ENCODE measurements at regions of chr5 and their contacts with region 1.

Region 1: GRCh38 chr5:81105261-81105877 is 127.8 kb upstream of the CKMT2 start:
- DNase-seq: no peak
- ATAC-seq: peak; percentile 40
- H3K4me3 Mint-ChIP-seq: no peak overlapping the region
- H3K27ac Mint-ChIP-seq: peak overlapping the region; percentile 20
- H3K4me1 Mint-ChIP-seq: peaks cover 29% of the 10 kb centered on the region
- H3K27me3 Mint-ChIP-seq: no peaks in the 10 kb centered on the region
- CTCF ChIP-seq: no peak

Region 2: GRCh38 chr5:80822640-80823039 is 282.7 kb before region 1 on chr5:
- CTCF ChIA-PET with region 1: no interaction called
- POLR2A ChIA-PET with region 1: no interaction called
- intact Hi-C with region 1: no loop called
- DNase-seq: no peak
- ATAC-seq: no peak
- H3K4me3 Mint-ChIP-seq: no peak overlapping the region
- H3K27ac Mint-ChIP-seq: no peak overlapping the region
- H3K4me1 Mint-ChIP-seq: no peaks in the 10 kb centered on the region
- H3K27me3 Mint-ChIP-seq: no peaks in the 10 kb centered on the region
- CTCF ChIP-seq: no peak

Region 3: DNA sequence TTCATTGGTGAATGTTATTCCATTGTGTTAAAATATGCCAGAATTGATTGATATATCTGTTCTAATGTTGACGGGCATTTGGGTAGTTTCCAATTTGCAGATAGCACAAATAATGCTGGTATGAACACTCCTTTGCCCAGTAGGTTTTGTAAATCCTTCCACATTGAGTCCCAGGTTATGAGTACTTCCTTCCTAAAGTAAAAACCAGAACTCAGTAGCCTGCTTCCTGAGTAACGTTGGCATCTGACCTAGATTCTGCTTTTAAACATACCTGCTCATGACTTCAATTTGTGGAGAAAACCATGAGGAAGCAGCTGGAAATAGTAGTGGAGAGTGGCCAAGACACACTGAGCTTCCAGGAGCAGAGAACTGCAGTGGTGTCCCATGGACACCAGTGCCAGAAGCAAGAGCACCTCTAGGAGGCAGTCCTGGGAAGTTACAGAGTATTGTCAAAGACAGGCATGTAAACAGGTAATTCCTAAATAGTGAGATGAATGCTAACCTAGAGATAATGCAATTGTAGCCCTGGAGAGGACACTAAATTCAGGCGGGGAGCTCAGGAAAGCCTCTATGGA is 169.5 kb before region 1 on chr5:
- CTCF ChIA-PET with region 1: interaction called, 11 read pairs
- POLR2A ChIA-PET with region 1: interaction called, 3 read pairs
- intact Hi-C with region 1: no loop called
- DNase-seq: no peak
- ATAC-seq: no peak
- H3K4me3 Mint-ChIP-seq: no peak overlapping the region
- H3K27ac Mint-ChIP-seq: no peak overlapping the region
- H3K4me1 Mint-ChIP-seq: peaks cover 4% of the 10 kb centered on the region
- H3K27me3 Mint-ChIP-seq: no peaks in the 10 kb centered on the region
- CTCF ChIP-seq: no peak

Region 4: GRCh38 chr5:80998590-80998979 is 106.8 kb before region 1 on chr5:
- CTCF ChIA-PET with region 1: interaction called, 12 read pairs
- POLR2A ChIA-PET with region 1: no interaction called
- intact Hi-C with region 1: no loop called
- DNase-seq: peak; percentile 83
- ATAC-seq: peak; percentile 82
- H3K4me3 Mint-ChIP-seq: peak overlapping the region; percentile 75
- H3K27ac Mint-ChIP-seq: peak overlapping the region; percentile 98
- H3K4me1 Mint-ChIP-seq: peaks cover 71% of the 10 kb centered on the region
- H3K27me3 Mint-ChIP-seq: no peaks in the 10 kb centered on the region
- CTCF ChIP-seq: no peak

Region 5: DNA sequence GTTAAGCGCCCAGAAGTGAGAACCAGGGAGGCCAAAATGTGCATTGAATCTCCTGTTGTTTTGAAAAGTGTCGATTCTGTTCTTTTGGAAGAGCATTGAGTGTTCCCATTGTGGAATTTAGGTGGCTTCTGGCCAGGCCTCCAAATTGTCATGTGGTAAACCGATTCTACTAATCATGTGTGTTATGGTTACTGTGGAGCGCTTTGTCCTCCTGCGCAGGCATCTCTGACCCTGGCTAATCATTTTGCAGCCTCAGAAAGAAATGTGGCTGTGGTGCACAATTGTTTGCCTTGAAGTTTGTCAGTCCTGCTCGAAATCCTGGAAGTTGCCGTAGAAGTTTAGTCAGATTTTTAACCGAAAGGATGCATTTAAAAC is 23.9 kb before region 1 on chr5:
- CTCF ChIA-PET with region 1: interaction called, 11 read pairs
- POLR2A ChIA-PET with region 1: no interaction called
- intact Hi-C with region 1: no loop called
- DNase-seq: no peak
- ATAC-seq: no peak
- H3K4me3 Mint-ChIP-seq: no peak overlapping the region
- H3K27ac Mint-ChIP-seq: no peak overlapping the region
- H3K4me1 Mint-ChIP-seq: no peaks in the 10 kb centered on the region
- H3K27me3 Mint-ChIP-seq: no peaks in the 10 kb centered on the region
- CTCF ChIP-seq: no peak

Measured in activated CD8-positive, alpha-beta T cell treated with anti-CD3 and anti-CD28 coated beads for 36 hours (primary cell).